ENCODE measurements at regions of chr16 and their contacts with region 1.

Region 1: DNA sequence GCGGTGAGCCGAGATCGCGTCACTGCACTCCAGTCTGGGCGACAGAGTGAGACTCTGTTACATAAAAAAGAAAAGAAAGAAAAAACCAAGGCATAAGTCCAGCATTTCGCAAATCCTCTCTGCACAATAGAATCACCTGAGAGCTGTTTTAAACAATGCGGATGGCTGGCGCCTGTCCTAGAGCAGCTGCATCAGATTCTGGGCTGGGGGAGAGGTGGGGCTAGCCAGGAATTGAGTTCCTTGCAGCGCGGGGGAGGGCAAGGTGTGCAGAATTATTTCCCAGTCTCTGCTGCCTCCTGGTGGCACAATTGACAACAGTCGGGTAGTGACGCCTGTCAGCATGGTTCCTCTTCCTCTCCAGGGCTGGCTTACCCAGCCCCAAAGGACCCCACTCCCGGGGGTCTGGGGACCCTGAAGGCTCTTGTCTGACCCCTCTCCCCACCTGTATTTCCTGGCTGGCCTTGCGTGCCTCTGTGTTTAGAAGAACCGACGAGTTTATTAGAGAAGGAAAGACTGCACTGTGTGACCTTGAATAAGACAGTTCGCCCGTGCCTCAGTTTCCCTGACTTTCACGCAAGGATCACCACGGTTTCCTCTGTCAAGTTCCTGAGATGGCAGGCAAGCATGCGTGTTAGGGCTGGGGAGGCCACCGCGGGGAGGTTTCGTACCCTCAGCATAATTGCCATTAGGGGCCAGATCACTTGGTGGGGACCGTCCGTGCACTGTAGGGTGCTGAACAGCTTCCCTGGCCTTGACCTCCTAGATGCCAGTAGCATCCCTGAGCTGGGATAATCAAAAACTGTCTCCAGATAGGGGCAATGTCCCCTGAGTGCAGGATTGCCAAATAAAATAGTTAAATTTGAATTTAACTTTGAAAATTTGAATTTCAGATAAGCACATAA is 41.0 kb upstream of the PLCG2 start:
- DNase-seq: peak; percentile 79
- H3K4me3 ChIP-seq: no peak overlapping the region
- H3K27ac ChIP-seq: no peak overlapping the region
- H3K4me1 ChIP-seq: no peaks in the 10 kb centered on the region
- H3K27me3 ChIP-seq: no peaks in the 10 kb centered on the region
- CTCF ChIP-seq: peak; percentile 90

Region 2: DNA sequence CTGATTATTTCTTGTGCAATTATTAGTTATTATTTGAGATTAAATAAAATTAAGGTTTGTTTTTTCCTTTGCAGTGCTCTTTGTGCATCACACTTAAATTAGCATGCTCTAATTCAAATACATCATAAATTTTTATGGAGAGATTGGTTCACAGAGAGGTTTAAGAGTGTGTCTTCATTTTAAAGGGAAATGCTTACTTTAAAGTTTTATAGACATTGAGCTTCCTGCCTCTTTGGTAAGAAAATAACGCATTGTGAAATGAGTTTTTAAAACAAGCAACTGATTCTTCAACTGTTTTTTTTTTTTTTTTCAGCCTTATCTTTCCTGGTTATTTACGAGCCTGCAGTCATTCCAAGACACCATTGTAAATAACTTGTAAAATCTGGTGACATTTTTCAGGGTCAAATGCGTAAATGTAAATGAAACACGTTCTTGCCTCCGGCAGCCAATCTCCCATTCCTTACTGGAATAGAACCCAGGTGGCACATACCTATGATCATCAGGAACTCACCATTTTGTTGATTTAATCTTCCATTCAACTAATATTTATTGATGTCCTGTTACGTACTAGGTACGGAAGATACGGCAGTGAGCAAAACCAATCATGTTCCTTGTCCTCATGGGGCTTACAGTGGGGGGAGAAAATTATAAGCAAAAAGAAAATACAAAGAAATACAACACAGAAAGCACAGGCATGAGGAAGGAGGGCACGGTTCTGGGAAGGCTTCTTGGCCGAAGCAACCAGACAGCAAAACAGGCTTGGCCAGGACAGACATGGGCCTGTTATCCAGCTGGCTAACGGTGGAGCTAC is 900.5 kb before region 1 on chr16:
- CTCF ChIA-PET with region 1: no interaction called
- POLR2A ChIA-PET with region 1: no interaction called
- intact Hi-C with region 1: no loop called
- DNase-seq: no peak
- H3K4me3 ChIP-seq: no peak overlapping the region
- H3K27ac ChIP-seq: no peak overlapping the region
- H3K4me1 ChIP-seq: no peaks in the 10 kb centered on the region
- H3K27me3 ChIP-seq: peaks cover 39% of the 10 kb centered on the region
- CTCF ChIP-seq: no peak

Region 3: DNA sequence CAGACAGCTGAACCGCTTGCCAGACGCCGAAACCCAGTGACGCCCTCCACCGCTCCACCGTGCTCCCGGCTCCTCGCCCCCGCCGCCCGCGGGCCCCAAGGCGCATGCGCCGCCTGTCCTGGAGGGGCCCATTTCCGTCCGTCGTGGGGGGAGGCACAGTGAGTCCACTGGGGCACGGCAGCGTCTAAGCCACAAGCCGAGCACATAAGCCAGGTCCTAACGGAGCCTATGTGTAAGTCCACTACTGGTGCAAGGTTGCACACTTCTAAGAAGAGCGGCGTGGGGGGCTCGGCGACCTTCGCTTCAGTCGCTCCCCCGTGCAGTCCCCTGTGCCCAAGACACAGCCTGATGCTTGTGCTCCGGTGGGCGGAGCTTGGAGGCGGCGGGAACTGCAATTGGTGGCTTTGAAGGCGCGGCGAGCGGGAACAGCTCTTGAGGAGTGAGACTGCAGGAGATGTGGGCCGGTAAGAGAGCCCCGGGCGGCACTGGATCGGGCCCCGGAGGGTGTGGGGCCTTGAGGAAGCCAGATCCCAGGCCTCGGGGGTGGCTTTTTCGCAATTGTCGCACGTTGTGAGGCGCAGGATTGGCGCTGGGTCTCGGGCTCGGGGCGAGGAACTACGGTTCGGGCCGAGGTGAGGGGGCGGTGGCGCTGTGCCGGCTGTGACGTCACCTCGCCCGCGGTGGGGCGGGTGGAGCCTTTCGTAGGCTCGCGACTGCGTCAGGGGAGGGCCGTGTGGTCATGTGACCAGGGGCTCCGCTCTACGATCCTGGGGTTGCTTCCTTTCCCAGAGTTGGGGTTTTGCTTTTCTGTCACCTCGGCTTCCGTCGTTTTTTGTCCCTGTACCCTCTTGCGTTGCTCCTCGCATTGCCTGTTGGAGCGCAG is 731.1 kb before region 1 on chr16 and contains the starts of genes CENPN and CMC2:
- CTCF ChIA-PET with region 1: no interaction called
- POLR2A ChIA-PET with region 1: no interaction called
- intact Hi-C with region 1: loop called (anchors 10 kb)
- DNase-seq: peak; percentile 99
- H3K4me3 ChIP-seq: peak within 1 kb of the TSS; percentile 71
- H3K27ac ChIP-seq: peak within 1 kb of the TSS; percentile 100
- H3K4me1 ChIP-seq: peaks cover 22% of the 10 kb centered on the region
- H3K27me3 ChIP-seq: no peaks in the 10 kb centered on the region
- CTCF ChIP-seq: no peak
- total RNA-seq, gene CENPN: 91.0 and 109 TPM in 2 replicates
- total RNA-seq, gene CMC2: 129 and 130 TPM in 2 replicates

Region 4: GRCh38 chr16:81035398-81035974 is 702.6 kb before region 1 on chr16 and contains the start of gene ATMIN:
- CTCF ChIA-PET with region 1: no interaction called
- POLR2A ChIA-PET with region 1: no interaction called
- intact Hi-C with region 1: loop called (anchors 10 kb)
- DNase-seq: peak; percentile 93
- H3K4me3 ChIP-seq: peak within 1 kb of the TSS; percentile 79
- H3K27ac ChIP-seq: peak within 1 kb of the TSS; percentile 38
- H3K4me1 ChIP-seq: no peaks in the 10 kb centered on the region
- H3K27me3 ChIP-seq: no peaks in the 10 kb centered on the region
- CTCF ChIP-seq: peak; percentile 88
- total RNA-seq, gene ATMIN: 43.5 and 44.6 TPM in 2 replicates

Region 5: GRCh38 chr16:81204798-81205680 is 533.1 kb before region 1 on chr16:
- CTCF ChIA-PET with region 1: no interaction called
- POLR2A ChIA-PET with region 1: no interaction called
- intact Hi-C with region 1: loop called (anchors 2 kb)
- DNase-seq: peak; percentile 67
- H3K4me3 ChIP-seq: no peak overlapping the region
- H3K27ac ChIP-seq: no peak overlapping the region
- H3K4me1 ChIP-seq: no peaks in the 10 kb centered on the region
- H3K27me3 ChIP-seq: peaks cover 1% of the 10 kb centered on the region
- CTCF ChIP-seq: peak; percentile 80

Region 6: DNA sequence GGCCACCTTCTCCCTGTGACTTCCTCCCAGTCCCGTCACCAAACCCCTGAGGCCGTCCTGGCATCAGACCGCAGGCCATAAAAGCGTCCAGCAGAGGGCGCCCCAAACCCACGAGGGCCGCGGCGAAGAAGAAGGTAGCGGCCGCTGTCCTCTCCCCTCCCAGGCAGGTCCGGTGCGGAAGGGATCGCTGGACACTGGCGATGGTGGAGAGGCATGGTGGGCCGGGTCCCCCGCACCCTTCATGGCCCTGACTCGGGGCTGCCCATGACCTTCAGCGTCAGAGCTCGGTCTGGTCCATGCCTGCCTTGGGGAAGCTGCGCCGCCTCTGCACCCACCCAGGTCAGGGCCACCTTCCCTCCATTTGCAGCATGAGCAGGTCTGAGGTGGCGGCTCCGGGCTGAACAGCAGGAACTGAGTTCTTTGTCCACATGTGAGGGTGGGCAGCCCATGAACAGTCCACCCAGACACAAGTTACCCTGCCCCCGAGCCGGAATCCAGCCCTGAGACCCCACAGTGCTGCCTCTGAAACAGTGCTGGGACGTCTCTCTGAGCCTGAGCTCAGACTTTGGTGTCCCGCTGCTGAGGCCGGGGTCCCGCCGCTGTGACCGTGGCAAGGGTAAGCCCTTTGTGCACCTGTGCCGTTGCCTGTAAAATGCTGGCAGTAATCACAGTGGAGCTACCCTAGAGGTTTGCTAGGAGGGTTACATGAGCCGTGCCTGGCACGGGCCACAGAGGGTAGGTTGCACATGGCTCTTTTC is 334.3 kb before region 1 on chr16:
- CTCF ChIA-PET with region 1: no interaction called
- POLR2A ChIA-PET with region 1: no interaction called
- intact Hi-C with region 1: loop called (anchors 5 kb)
- DNase-seq: peak; percentile 83
- H3K4me3 ChIP-seq: peak overlapping the region; percentile 40
- H3K27ac ChIP-seq: no peak overlapping the region
- H3K4me1 ChIP-seq: no peaks in the 10 kb centered on the region
- H3K27me3 ChIP-seq: no peaks in the 10 kb centered on the region
- CTCF ChIP-seq: peak; percentile 94

Region 7: DNA sequence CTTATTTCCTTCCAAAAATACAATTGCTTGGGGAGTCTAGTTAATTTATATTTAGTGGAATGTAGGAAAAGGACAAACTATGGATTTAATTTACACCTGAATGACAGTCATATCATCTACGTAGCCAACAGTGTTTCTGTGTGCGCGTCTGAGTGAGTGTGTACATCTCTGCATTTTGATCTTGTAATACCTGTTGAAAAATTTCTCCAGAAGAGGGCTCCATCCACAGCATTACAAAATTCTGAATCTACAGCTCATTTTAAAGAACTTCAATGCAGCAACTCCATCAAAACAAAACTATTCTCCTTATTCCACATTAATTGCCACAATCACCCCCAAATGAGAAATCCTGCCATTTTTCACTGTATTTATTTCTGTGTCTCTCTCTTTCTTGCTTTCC is 892.6 kb after region 1 on chr16:
- CTCF ChIA-PET with region 1: no interaction called
- POLR2A ChIA-PET with region 1: no interaction called
- intact Hi-C with region 1: no loop called
- DNase-seq: no peak
- H3K4me3 ChIP-seq: no peak overlapping the region
- H3K27ac ChIP-seq: no peak overlapping the region
- H3K4me1 ChIP-seq: no peaks in the 10 kb centered on the region
- H3K27me3 ChIP-seq: peaks cover 49% of the 10 kb centered on the region
- CTCF ChIP-seq: peak; percentile 32; the same call in 1 of the 2 replicates